Activated CD4-positive, alpha-beta T cell treated with anti-CD3 and anti-CD28 coated beads for 36 hours (primary cell): ENCODE measurements at regions of chr1 and their contacts with region 1.

Region 1: GRCh38 chr1:65995336-65995735 is 202.6 kb downstream of the PDE4B start:
- DNase-seq: no peak
- ATAC-seq: no peak
- H3K4me3 Mint-ChIP-seq: no peak overlapping the region
- H3K27ac Mint-ChIP-seq: no peak overlapping the region
- H3K4me1 Mint-ChIP-seq: no peaks in the 10 kb centered on the region
- H3K27me3 Mint-ChIP-seq: peaks cover 9% of the 10 kb centered on the region

Region 2: DNA sequence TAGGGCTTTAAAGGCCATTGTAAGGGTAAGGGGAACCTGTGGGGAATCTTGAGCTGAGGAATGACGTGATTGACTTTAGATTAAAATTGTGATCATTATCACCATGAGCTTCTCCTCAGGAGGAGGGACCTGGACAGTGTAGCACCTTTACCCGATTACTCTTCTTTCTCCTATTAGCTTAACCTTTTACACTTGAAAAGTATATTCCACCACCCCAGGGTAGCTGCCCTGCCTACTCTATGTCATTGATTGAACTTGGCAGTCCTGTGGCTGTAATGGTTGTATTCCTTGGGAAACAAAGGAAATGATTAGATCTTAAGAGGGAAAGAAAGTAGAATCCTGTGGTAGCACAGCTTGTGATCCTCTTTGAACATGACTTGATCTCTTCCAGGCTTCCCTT is 1477.7 kb before region 1 on chr1:
- CTCF ChIA-PET with region 1: interaction called, 10 read pairs
- POLR2A ChIA-PET with region 1: no interaction called
- intact Hi-C with region 1: no loop called
- DNase-seq: no peak
- ATAC-seq: no peak
- H3K4me3 Mint-ChIP-seq: no peak overlapping the region
- H3K27ac Mint-ChIP-seq: no peak overlapping the region
- H3K4me1 Mint-ChIP-seq: peaks cover 8% of the 10 kb centered on the region
- H3K27me3 Mint-ChIP-seq: no peaks in the 10 kb centered on the region